ENCODE measurements at regions of chr3 and their contacts with region 1.

Region 1: DNA sequence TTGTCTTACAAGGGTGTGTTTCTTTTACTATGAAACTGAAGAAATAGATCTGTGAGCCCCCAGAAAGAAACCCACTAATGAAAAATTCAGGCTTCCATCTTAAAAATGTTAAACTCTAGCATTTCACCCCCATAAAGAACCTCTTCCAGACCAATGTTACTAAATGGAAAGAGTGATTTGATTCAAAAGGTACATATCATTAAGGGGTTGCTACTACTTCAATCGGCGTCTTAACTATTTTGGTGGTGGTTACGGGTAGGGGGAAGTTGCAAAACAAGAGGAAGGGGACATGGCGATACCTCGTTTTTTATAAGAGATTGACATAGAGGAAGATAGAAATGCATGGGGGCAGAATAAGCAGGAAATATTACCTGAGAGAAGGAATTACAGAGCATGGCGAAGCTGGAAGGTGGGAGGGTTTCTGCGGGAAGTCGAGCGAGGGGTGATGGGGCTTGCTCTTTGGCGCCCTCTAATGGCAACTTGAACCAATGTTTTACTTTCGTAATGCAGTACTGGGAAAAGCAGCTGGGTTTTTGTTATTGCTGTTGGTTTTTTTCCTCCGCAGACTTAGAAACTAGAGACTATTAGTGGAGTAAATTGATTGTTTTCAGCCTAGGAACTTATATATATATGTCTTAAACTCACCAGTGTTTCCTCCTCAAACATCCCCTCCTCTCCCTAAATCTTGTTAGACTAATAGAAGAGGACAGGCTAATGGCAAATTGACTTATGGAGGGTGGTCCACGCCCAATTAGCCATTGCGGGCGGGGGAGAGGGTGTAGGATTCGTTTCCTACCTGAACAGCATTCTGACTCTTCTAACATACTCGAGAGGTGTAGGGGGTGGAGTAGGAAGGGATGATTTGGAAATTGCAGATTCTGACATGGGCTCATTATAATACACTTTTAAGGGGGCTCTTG is 11.3 kb upstream of the SOX2 start:
- DNase-seq: peak; percentile 62
- H3K4me3 Mint-ChIP-seq: peak overlapping the region; percentile 52
- H3K27ac Mint-ChIP-seq: no peak overlapping the region
- H3K4me1 Mint-ChIP-seq: peaks cover 23% of the 10 kb centered on the region
- H3K27me3 Mint-ChIP-seq: peaks cover 83% of the 10 kb centered on the region

Region 2: DNA sequence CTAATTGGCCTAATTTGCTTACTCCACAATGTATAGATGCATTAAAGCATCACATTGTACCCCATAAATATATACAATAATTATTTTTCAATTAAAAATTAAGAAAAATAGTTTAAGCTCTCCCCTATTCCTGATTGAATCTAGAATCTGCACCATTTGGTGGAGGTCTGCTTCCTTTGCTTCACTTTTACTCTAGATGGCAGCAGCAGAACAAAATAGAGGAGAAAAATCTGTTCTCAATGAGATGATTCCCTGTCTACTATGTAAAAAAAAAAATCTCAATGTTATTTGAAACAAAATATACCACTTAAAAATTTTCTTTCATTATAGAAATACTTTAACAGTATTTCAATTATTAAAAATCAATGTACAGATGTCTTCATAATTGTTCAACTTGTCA is 897.6 kb before region 1 on chr3:
- CTCF ChIA-PET with region 1: no interaction called
- intact Hi-C with region 1: loop called (anchors 5 kb)
- DNase-seq: no peak
- H3K4me3 Mint-ChIP-seq: no peak overlapping the region
- H3K27ac Mint-ChIP-seq: no peak overlapping the region
- H3K4me1 Mint-ChIP-seq: no peaks in the 10 kb centered on the region
- H3K27me3 Mint-ChIP-seq: peaks cover 13% of the 10 kb centered on the region

Region 3: DNA sequence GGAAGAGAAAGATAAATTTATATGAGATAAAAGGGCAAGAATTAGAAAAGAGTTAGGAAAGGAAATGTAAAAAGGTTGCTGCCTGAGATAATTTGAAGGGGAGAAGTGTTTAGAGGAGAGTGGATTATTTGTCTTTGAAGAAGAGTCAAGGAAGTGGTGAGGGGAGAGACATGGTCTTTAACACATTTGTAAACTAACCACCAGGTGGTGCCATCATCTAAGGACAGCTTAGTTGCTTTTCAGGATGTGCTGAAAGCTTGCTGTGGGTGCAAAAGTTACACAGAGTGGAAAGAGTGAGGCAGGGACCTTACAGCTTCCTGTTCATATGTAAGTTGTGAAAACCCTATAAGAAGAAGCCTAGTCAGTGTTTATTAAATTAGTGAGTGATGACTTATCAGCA is 596.8 kb before region 1 on chr3:
- CTCF ChIA-PET with region 1: no interaction called
- intact Hi-C with region 1: loop called (anchors 5 kb)
- DNase-seq: peak; percentile 29
- H3K4me3 Mint-ChIP-seq: no peak overlapping the region
- H3K27ac Mint-ChIP-seq: no peak overlapping the region
- H3K4me1 Mint-ChIP-seq: no peaks in the 10 kb centered on the region
- H3K27me3 Mint-ChIP-seq: no peaks in the 10 kb centered on the region

Region 4: GRCh38 chr3:181210275-181210674 is 490.2 kb before region 1 on chr3:
- CTCF ChIA-PET with region 1: interaction called, 5 read pairs
- intact Hi-C with region 1: loop called (anchors 1 kb)
- DNase-seq: no peak
- H3K4me3 Mint-ChIP-seq: no peak overlapping the region
- H3K27ac Mint-ChIP-seq: no peak overlapping the region
- H3K4me1 Mint-ChIP-seq: no peaks in the 10 kb centered on the region
- H3K27me3 Mint-ChIP-seq: peaks cover 4% of the 10 kb centered on the region

Region 5: GRCh38 chr3:181326637-181327223 is 373.7 kb before region 1 on chr3:
- CTCF ChIA-PET with region 1: interaction called, 6 read pairs
- intact Hi-C with region 1: loop called (anchors 1 kb)
- DNase-seq: no peak
- H3K4me3 Mint-ChIP-seq: no peak overlapping the region
- H3K27ac Mint-ChIP-seq: no peak overlapping the region
- H3K4me1 Mint-ChIP-seq: no peaks in the 10 kb centered on the region
- H3K27me3 Mint-ChIP-seq: peaks cover 3% of the 10 kb centered on the region

Region 6: DNA sequence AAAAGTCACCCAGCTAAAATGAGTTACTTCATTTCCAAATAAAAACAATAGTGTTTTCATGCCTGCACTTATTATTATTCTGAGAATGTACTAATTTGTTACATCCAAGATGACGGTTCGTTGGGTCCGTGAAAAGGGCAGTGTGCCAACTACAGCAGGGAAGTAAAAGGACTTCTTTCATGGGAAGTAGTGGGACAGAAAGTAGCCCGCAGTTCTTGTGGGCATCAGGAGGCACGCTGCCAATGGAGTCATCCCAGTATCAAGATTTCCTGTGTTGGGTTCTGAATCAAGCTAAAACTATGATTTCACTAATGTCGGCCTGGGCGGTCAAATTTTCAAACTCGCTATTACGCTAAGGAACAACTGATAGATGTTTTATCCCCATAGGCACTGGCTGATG is 243.2 kb before region 1 on chr3:
- CTCF ChIA-PET with region 1: no interaction called
- intact Hi-C with region 1: no loop called
- DNase-seq: no peak
- H3K4me3 Mint-ChIP-seq: no peak overlapping the region
- H3K27ac Mint-ChIP-seq: no peak overlapping the region
- H3K4me1 Mint-ChIP-seq: no peaks in the 10 kb centered on the region
- H3K27me3 Mint-ChIP-seq: no peaks in the 10 kb centered on the region